ENCODE measurements at regions of chr2 and their contacts with region 1.

Region 1: DNA sequence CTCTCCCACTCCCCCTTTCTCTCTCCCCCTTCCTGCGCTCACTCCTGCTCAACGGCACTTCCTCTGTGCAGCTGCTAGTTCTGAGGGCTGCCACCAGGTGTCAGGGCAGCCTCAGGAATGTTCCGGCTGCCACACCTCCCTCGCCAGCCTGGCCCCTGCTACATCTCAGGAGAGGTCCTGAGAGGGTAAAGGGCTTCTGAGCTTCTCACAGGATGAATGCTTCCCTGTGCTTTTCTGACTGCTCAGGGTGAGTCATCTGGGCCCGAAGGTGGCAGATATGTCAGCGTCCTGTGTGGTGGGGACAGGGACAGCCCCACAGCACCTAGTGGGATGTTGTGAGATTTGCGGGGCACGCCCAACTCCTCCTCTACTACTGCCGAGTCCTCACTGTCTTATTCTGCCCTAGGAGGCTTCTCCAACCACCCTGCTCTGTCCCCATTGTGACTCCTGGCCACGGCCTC is 49.0 kb downstream of the PLEKHB2 start:
- DNase-seq: peak; percentile 13
- H3K4me3 ChIP-seq: no peak overlapping the region
- H3K27ac ChIP-seq: no peak overlapping the region
- H3K27me3 ChIP-seq: no peaks in the 10 kb centered on the region
- CTCF ChIP-seq: peak; percentile 88

Region 2: GRCh38 chr2:131132729-131133128 is 21.4 kb before region 1 on chr2:
- CTCF ChIA-PET with region 1: interaction called, 13 read pairs
- POLR2A ChIA-PET with region 1: no interaction called
- DNase-seq: no peak
- H3K4me3 ChIP-seq: no peak overlapping the region
- H3K27ac ChIP-seq: no peak overlapping the region
- H3K27me3 ChIP-seq: no peaks in the 10 kb centered on the region
- CTCF ChIP-seq: no peak

Region 3: DNA sequence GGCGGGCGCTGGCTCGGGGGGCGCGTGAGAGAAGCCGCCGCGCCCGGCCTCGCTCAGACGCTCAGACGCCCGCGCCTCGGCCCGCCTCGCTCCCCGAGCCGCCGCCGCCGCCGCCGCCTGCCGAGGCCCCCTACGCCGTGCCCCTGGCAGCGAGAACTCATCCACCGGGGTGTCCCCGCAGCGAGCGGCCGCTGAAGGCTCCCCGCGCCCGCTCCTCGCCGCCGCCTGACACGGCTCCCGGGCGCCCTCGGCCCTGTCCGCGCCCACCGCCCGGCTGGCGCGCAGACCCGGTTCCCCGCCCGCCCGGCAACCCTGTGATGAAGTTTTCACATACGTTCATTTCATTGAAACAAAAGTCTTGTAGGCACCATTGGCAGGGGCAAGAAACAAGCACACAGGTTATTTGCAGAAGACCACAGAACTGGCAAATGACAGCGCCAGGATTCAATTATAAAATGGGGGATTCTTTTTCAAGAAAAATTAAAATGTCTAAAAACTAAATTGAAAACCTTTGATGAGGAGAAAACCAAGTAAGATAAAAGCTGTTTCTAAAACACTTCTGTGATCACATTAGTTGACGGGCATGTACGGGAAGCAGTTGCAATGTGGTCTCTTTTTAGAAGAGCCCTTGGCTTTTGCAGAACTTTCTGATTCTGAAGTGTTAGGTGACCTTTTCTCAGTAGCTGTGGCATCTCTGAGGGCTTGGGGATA is 271.3 kb after region 1 on chr2:
- CTCF ChIA-PET with region 1: no interaction called
- POLR2A ChIA-PET with region 1: no interaction called
- DNase-seq: no peak
- H3K4me3 ChIP-seq: no peak overlapping the region
- H3K27ac ChIP-seq: no peak overlapping the region
- H3K27me3 ChIP-seq: peaks cover 35% of the 10 kb centered on the region
- CTCF ChIP-seq: no peak

Region 4: GRCh38 chr2:131445896-131446295 is 291.8 kb after region 1 on chr2:
- CTCF ChIA-PET with region 1: no interaction called
- POLR2A ChIA-PET with region 1: no interaction called
- DNase-seq: no peak
- H3K4me3 ChIP-seq: no peak overlapping the region
- H3K27ac ChIP-seq: no peak overlapping the region
- H3K27me3 ChIP-seq: no peaks in the 10 kb centered on the region
- CTCF ChIP-seq: no peak